ENCODE measurements at regions of chr7 and their contacts with region 1.

Region 1: GRCh38 chr7:150631866-150632864 is at the start of gene GIMAP6:
- DNase-seq: peak; percentile 7 to 69 (median 32)
- ATAC-seq: peak; percentile 59 to 72
- H3K4me3 Mint-ChIP-seq: peak within 1 kb of the TSS; percentile 92 to 98 (median 96)
- H3K27ac Mint-ChIP-seq: peak within 1 kb of the TSS; percentile 90 to 98 (median 96)
- H3K4me1 Mint-ChIP-seq: peaks cover 41 to 87% (median 84%) of the 10 kb centered on the region in 4 donors
- H3K27me3 Mint-ChIP-seq: no peaks in the 10 kb centered on the region
- polyA plus RNA-seq, gene GIMAP6: 115 to 173 (median 121) TPM

Region 2: GRCh38 chr7:150481186-150481920 is 150.8 kb before region 1 on chr7:
- POLR2A ChIA-PET with region 1: interaction called, 34 read pairs
- DNase-seq: peak; percentile 25 to 76 (median 63)
- ATAC-seq: peak; percentile 51 to 69
- H3K4me3 Mint-ChIP-seq: peak overlapping the region; percentile 71 to 97 (median 88)
- H3K27ac Mint-ChIP-seq: peak overlapping the region; percentile 98 to 100 (median 100)
- H3K4me1 Mint-ChIP-seq: peaks cover 57 to 98% (median 94%) of the 10 kb centered on the region in 4 donors
- H3K27me3 Mint-ChIP-seq: no peaks in the 10 kb centered on the region

Region 3: DNA sequence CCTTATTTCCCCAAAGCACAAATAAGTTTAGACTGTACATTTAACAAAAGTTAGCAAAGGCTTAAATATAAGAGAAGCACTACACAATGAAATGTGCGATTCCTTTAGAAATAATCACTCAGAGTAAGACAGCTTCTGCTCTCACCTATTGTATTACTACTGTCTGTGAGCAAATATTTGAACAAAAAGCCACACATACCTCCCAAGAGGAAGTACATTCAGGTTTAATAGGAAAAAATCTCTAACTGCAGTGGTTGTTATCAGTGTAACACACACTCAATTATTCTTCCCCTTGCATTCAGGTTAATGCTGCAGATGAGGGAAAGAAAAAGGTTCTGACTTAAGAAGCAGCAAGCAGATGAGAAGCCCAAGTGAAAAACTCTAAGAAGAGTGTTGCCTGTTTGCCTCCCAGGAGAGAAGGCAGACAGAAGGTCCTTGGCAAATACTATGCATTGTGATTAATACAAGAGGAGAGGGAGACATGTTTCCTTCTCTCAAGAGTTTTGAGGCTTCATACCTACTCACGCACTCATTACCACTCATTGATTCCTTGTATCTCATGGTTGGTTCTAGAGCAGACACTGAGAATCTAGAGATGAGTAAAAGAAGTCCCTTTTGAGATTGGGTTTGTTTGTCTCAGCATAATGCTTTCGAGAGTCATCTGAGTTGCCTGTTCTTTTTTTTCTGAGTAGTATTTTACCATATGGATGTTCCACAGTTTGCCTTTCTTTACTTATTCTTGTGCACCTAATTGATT is 51.3 kb before region 1 on chr7:
- POLR2A ChIA-PET with region 1: interaction called, 10 read pairs
- DNase-seq: no peak
- ATAC-seq: no peak
- H3K4me3 Mint-ChIP-seq: peak overlapping the region in 1 of 10 donors; percentile 38
- H3K27ac Mint-ChIP-seq: peak overlapping the region in 7 of 10 donors; percentile 7 to 85 (median 76)
- H3K4me1 Mint-ChIP-seq: peaks cover 15 to 64% (median 44%) of the 10 kb centered on the region in 4 donors
- H3K27me3 Mint-ChIP-seq: no peaks in the 10 kb centered on the region

Region 4: DNA sequence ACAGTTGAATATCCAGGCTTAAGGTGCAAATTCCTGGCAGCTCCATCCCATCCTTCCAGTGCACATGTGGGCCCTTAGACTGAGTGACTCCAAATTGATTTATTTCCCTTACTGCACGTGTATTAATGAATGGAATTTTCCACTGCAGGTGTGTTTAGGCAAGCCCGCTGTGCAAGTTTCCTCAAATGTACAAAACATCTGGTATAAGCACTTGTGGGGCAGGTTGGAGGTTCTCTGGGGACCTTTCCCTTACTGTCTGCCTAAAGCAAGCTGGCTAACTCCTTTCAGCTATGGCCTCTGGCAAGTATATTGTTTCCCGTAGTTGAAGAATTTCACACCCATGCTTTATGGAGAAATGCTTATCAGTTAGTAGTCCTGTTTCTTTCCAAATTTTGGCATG is 25.4 kb after region 1 on chr7:
- POLR2A ChIA-PET with region 1: interaction called, 23 read pairs
- DNase-seq: no peak
- ATAC-seq: no peak
- H3K4me3 Mint-ChIP-seq: no peak overlapping the region
- H3K27ac Mint-ChIP-seq: no peak overlapping the region
- H3K4me1 Mint-ChIP-seq: peaks cover 12 to 53% (median 42%) of the 10 kb centered on the region in 4 donors
- H3K27me3 Mint-ChIP-seq: no peaks in the 10 kb centered on the region

Region 5: GRCh38 chr7:150685219-150686029 is 53.3 kb after region 1 on chr7 and contains the start of gene GIMAP2:
- POLR2A ChIA-PET with region 1: interaction called, 151 read pairs
- DNase-seq: peak in 5 of 10 donors; percentile 7 to 68 (median 58)
- ATAC-seq: peak; percentile 71 to 89
- H3K4me3 Mint-ChIP-seq: peak within 1 kb of the TSS; percentile 94 to 100 (median 97)
- H3K27ac Mint-ChIP-seq: peak within 1 kb of the TSS; percentile 95 to 100 (median 98)
- H3K4me1 Mint-ChIP-seq: peaks cover 46 to 93% (median 80%) of the 10 kb centered on the region in 4 donors
- H3K27me3 Mint-ChIP-seq: no peaks in the 10 kb centered on the region
- polyA plus RNA-seq, gene GIMAP2: 89.3 to 102 (median 93.8) TPM

Region 6: GRCh38 chr7:150748376-150748775 is 116.2 kb after region 1 on chr7:
- POLR2A ChIA-PET with region 1: interaction called, 53 read pairs
- DNase-seq: peak in 1 of 10 donors; percentile 57
- ATAC-seq: peak; percentile 37 to 61
- H3K4me3 Mint-ChIP-seq: peak overlapping the region; percentile 16 to 88 (median 69)
- H3K27ac Mint-ChIP-seq: peak overlapping the region; percentile 89 to 100 (median 95)
- H3K4me1 Mint-ChIP-seq: peaks cover 51 to 93% (median 90%) of the 10 kb centered on the region in 4 donors
- H3K27me3 Mint-ChIP-seq: no peaks in the 10 kb centered on the region